ENCODE measurements at regions of chr1 and their contacts with region 1.

Region 1: GRCh38 chr1:167220537-167221125 is at the start of gene POU2F1:
- DNase-seq: peak; percentile 99
- H3K4me3 Mint-ChIP-seq: peak within 1 kb of the TSS; percentile 99
- H3K27ac Mint-ChIP-seq: peak within 1 kb of the TSS; percentile 99
- H3K4me1 Mint-ChIP-seq: peaks cover 37% of the 10 kb centered on the region
- H3K27me3 Mint-ChIP-seq: peaks cover 2% of the 10 kb centered on the region
- total RNA-seq, gene POU2F1: 17.6 to 19.4 TPM

Region 2: GRCh38 chr1:166875734-166876539 is 344.7 kb before region 1 on chr1 and contains the start of gene TADA1:
- CTCF ChIA-PET with region 1: no interaction called
- intact Hi-C with region 1: loop called (anchors 1 kb)
- DNase-seq: peak; percentile 100
- H3K4me3 Mint-ChIP-seq: peak within 1 kb of the TSS; percentile 99
- H3K27ac Mint-ChIP-seq: peak within 1 kb of the TSS; percentile 97
- H3K4me1 Mint-ChIP-seq: peaks cover 37% of the 10 kb centered on the region
- H3K27me3 Mint-ChIP-seq: no peaks in the 10 kb centered on the region
- total RNA-seq, gene TADA1: 19.6 to 19.9 TPM

Region 3: GRCh38 chr1:167082511-167083027 is 138.1 kb before region 1 on chr1:
- CTCF ChIA-PET with region 1: interaction called, 3 read pairs
- intact Hi-C with region 1: loop called (anchors 1 kb)
- DNase-seq: no peak
- H3K4me3 Mint-ChIP-seq: no peak overlapping the region
- H3K27ac Mint-ChIP-seq: no peak overlapping the region
- H3K4me1 Mint-ChIP-seq: peaks cover 13% of the 10 kb centered on the region
- H3K27me3 Mint-ChIP-seq: no peaks in the 10 kb centered on the region

Region 4: GRCh38 chr1:167263819-167264464 is 43.3 kb after region 1 on chr1:
- CTCF ChIA-PET with region 1: interaction called, 8 read pairs
- intact Hi-C with region 1: loop called (anchors 1 kb)
- DNase-seq: no peak
- H3K4me3 Mint-ChIP-seq: no peak overlapping the region
- H3K27ac Mint-ChIP-seq: no peak overlapping the region
- H3K4me1 Mint-ChIP-seq: peaks cover 20% of the 10 kb centered on the region
- H3K27me3 Mint-ChIP-seq: no peaks in the 10 kb centered on the region

Region 5: DNA sequence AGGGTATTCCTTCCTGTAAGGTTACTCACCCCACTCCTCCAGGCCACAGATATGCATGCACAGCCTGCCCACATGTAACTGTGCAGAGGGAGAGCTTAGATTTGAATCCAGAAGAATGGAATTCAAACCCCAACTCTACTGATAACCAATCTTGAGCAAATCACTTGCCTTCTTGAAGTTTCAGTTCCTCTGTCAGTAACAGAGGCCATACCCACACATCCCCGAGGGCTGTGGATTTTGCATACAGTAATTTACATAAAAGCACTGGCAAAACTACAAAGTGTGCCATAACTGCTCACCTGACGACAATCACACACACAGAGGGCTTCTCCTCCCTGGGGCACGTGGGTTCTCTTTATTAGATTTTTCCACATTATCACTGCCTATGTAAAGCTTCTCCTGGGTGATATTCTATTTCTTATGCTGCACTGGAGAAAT is 279.1 kb after region 1 on chr1:
- CTCF ChIA-PET with region 1: interaction called, 7 read pairs
- intact Hi-C with region 1: loop called (anchors 1 kb)
- DNase-seq: peak; percentile 59
- H3K4me3 Mint-ChIP-seq: peak overlapping the region; percentile 10
- H3K27ac Mint-ChIP-seq: peak overlapping the region; percentile 87
- H3K4me1 Mint-ChIP-seq: peaks cover 97% of the 10 kb centered on the region
- H3K27me3 Mint-ChIP-seq: no peaks in the 10 kb centered on the region

Region 6: DNA sequence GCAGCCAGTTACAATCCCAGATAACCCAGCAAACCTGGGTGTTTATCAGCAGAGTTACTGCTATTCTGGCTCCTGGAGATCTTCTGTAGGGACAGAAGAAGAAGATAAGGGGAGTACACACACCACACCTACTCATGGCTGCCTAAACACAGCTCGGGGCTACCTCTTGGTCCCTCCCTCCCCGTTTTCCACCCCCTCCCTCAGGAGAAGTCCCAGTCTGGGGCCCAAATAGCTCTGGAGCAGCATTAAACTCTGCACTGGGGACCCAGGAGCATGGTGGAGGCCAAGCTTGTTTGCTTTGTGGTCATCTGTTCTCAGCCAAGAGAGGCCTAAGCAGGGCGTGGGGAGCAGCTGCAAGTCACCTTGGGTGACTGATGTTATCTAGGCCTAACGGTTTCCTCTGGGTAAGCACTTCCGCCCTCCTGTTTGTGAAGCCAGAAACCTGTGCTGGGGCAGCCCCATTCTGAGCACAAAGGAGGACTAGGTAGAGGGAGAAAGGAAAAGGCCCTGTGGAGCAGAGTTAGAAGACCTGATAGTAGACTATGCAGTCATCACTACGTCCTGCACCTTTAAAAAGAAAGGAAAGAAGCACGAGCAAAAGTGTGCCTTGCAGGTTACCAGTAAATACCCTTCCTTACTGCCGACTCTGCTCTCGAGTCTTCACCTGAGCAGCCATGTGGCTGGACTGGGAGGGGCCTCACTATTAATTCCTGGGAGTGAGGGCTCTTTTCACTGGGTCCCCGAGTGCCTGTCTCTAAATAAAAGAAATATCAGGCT is 407.4 kb after region 1 on chr1:
- CTCF ChIA-PET with region 1: no interaction called
- intact Hi-C with region 1: loop called (anchors 2 kb)
- DNase-seq: peak; percentile 92
- H3K4me3 Mint-ChIP-seq: peak overlapping the region; percentile 81
- H3K27ac Mint-ChIP-seq: peak overlapping the region; percentile 94
- H3K4me1 Mint-ChIP-seq: peaks cover 55% of the 10 kb centered on the region
- H3K27me3 Mint-ChIP-seq: no peaks in the 10 kb centered on the region

Region 7: DNA sequence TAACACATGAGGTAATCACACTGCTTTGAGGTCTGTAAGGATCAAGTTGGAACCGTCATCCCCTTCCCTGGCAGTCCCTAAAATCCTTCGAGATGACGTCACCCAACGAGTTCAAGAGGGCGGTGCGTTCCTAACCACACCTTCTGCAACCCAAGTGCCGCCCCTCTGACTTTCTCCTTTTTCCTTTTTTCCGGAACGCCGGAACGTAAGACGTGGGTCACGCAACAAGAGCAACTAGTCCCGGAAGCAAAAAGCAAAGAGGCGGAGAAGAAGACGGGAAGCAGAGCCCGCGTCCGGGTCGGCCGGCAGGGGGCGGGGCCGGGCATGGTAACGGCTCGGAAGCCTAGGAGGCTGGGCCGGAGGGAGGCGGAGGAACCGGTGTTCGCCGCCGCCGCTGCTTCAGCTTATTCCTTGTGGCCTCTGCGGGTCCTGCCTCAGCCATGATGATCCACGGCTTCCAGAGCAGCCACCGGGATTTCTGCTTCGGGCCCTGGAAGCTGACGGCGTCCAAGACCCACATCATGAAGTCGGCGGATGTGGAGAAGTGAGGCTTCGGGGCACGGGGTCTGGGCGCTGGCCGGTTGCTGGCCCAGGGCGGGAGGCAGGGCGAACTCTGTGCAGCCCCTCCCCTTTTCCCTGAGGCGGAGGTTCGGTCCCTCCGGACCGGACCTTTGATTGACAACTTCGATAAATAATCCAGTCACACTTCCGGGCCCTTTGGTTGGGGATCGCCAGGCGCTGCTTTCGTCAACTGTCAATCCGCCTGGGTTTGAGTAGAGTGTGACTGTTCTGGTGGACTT is 958.2 kb after region 1 on chr1 and contains the start of gene TIPRL:
- CTCF ChIA-PET with region 1: no interaction called
- intact Hi-C with region 1: loop called (anchors 2 kb)
- DNase-seq: peak; percentile 97
- H3K4me3 Mint-ChIP-seq: no peak within 1 kb of the TSS
- H3K27ac Mint-ChIP-seq: no peak within 1 kb of the TSS
- H3K4me1 Mint-ChIP-seq: peaks cover 7% of the 10 kb centered on the region
- H3K27me3 Mint-ChIP-seq: peaks cover 2% of the 10 kb centered on the region
- total RNA-seq, gene TIPRL: 76.7 to 81.3 TPM

Measured in activated naive CD4-positive, alpha-beta T cell treated with anti-CD3 and anti-CD28 coated beads for 36 hours (primary cell).